BJ (cell line): ENCODE measurements at regions of chr1 and their contacts with region 1.

Region 1: DNA sequence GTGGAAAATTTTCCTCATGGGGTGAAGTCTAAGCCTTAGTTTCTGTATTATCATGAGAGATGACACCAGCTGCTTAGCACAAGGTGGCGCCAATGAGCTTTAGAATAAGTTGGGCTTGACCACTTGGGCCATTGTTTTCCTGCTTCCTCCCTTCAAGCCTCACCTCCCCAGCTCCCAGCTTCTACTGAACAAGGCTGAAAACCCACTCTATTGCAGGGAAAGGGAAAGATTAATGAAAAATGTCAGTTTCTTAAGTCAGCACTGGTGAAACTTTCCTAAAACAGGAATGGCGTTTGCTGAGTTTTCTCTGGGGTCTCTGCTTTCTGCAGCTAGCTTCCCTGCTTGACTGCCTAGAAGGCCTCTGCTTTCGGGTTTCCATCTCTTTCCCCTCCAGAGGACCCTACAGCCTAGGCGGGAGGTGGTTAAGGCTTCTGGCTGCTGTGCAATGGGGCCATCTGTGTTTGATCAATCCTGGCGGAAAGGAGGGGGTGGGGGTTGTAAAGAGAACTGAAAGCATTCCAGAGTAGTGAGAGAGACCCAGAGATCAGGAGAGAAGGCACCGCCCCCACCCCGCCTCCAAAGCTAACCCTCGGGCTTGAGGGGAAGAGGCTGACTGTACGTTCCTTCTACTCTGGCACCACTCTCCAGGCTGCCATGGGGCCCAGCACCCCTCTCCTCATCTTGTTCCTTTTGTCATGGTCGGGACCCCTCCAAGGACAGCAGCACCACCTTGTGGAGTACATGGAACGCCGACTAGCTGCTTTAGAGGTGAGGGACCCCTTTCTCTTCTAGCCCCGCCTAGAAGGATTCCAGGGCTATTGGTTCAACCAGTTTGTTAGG is at the start of gene OLFML3:
- DNase-seq: peak; percentile 89
- H3K4me3 ChIP-seq: peak within 1 kb of the TSS; percentile 45
- H3K27me3 ChIP-seq: no peaks in the 10 kb centered on the region
- CTCF ChIP-seq: peak; percentile 69
- polyA plus RNA-seq, gene OLFML3: 72.6 and 76.8 TPM in 2 replicates

Region 2: GRCh38 chr1:113928941-113929749 is 49.9 kb before region 1 on chr1 and contains the start of gene HIPK1:
- CTCF ChIA-PET with region 1: interaction called, 26 read pairs
- POLR2A ChIA-PET with region 1: no interaction called
- DNase-seq: no peak
- H3K4me3 ChIP-seq: peak within 1 kb of the TSS; percentile 70
- H3K27me3 ChIP-seq: no peaks in the 10 kb centered on the region
- CTCF ChIP-seq: no peak
- polyA plus RNA-seq, gene HIPK1: 27.6 and 29.7 TPM in 2 replicates

Region 3: DNA sequence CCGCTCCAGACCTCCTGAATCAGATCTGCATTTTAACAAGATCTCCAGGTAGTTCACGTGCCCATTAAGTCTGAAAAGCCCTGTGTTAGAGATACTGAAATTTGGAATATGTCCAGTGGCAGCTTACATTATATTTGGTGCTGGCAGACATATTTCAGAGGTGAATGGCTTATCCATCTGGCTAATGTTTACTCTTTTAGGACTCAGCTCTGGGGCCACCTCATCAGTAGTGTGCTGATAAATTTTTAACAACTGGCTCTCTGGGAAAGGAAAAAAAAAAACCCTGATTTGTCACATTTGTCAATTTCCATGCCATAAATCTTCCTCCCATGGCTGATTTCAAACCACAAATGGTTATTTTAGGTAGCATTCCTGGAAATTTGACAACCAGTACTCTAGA is 199.9 kb after region 1 on chr1:
- CTCF ChIA-PET with region 1: no interaction called
- POLR2A ChIA-PET with region 1: no interaction called
- DNase-seq: no peak
- H3K4me3 ChIP-seq: no peak overlapping the region
- H3K27me3 ChIP-seq: no peaks in the 10 kb centered on the region
- CTCF ChIP-seq: no peak

Region 4: GRCh38 chr1:114282751-114283403 is 303.8 kb after region 1 on chr1:
- CTCF ChIA-PET with region 1: interaction called, 160 read pairs
- POLR2A ChIA-PET with region 1: no interaction called
- DNase-seq: peak; percentile 16
- H3K4me3 ChIP-seq: no peak overlapping the region
- H3K27me3 ChIP-seq: peaks cover 3% of the 10 kb centered on the region; the same call in 1 of the 2 replicates
- CTCF ChIP-seq: peak; percentile 92